SK-N-SH (cell line): ENCODE measurements at regions of chr1 and their contacts with region 1.

Region 1: GRCh38 chr1:53754484-53755312 is 15.7 kb upstream of the GLIS1 start:
- DNase-seq: peak; percentile 58
- H3K4me3 ChIP-seq: no peak overlapping the region
- H3K27ac ChIP-seq: no peak overlapping the region
- H3K4me1 ChIP-seq: no peaks in the 10 kb centered on the region
- H3K27me3 ChIP-seq: no peaks in the 10 kb centered on the region
- CTCF ChIP-seq: peak; percentile 87
- EP300 ChIP-seq: no peak
- RAD21 ChIP-seq: peak; percentile 87

Region 2: DNA sequence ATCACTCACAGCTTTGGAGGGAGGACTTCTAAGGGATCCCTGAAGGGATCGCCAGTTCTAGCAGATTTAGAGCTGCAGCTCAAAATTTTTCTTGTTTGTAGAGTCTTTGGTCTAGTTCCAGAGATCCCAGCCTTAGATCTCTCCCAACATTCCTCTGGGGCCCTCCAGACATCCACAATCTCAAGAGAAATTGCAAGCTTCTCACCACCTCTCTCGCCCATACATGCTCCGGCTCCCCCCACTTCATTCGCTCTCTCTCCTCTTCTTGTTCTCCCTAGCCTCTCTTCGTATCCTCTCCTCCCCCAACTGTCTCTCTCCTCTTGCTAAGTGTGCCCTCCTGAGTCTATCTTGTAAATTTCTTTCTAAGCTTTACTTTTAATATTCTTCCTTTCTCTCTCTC is 1186.8 kb before region 1 on chr1:
- CTCF ChIA-PET with region 1: no interaction called
- POLR2A ChIA-PET with region 1: no interaction called
- DNase-seq: no peak
- H3K4me3 ChIP-seq: no peak overlapping the region
- H3K27ac ChIP-seq: no peak overlapping the region
- H3K4me1 ChIP-seq: peaks cover 0 to 6% of the 10 kb centered on the region in 2 experiments; a peak in 1 of 4 replicates
- H3K27me3 ChIP-seq: no peaks in the 10 kb centered on the region
- CTCF ChIP-seq: no peak
- EP300 ChIP-seq: no peak
- RAD21 ChIP-seq: 0 out of 2 replicates have a peak, but pooled peaks have one; percentile 11

Region 3: GRCh38 chr1:53462769-53463501 is 291.8 kb before region 1 on chr1:
- CTCF ChIA-PET with region 1: interaction called, 10 read pairs
- POLR2A ChIA-PET with region 1: no interaction called
- DNase-seq: peak; percentile 81
- H3K4me3 ChIP-seq: no peak overlapping the region
- H3K27ac ChIP-seq: peak overlapping the region in 1 of 2 experiments; percentile 76; a peak in 2 of 4 replicates
- H3K4me1 ChIP-seq: peaks cover 0 to 18% of the 10 kb centered on the region in 2 experiments; a peak in 1 of 4 replicates
- H3K27me3 ChIP-seq: no peaks in the 10 kb centered on the region
- CTCF ChIP-seq: no peak
- EP300 ChIP-seq: peak in 1 of 2 experiments; percentile 36; a peak in 1 of 4 replicates
- RAD21 ChIP-seq: no peak

Region 4: DNA sequence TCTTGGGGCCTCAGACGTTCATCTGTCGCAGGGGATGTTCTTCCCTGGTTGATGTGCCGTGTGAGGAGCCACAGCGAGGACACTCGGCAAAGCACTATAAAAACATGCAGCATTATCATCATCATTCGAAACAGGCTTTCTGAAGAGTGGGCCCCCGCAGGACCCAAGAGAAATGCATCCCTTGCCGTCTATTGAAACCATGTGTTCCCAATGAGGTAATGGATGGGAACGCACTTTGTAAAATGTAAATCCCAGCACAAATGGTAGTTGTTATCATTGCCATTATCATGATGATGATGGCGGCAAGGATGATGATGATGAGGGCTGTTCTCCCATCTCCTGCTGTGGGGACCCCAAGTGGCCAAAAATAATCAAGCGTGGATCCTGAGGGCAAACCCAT is 92.5 kb before region 1 on chr1:
- CTCF ChIA-PET with region 1: no interaction called
- POLR2A ChIA-PET with region 1: no interaction called
- DNase-seq: no peak
- H3K4me3 ChIP-seq: no peak overlapping the region
- H3K27ac ChIP-seq: no peak overlapping the region
- H3K4me1 ChIP-seq: no peaks in the 10 kb centered on the region; a peak in 1 of 4 replicates
- H3K27me3 ChIP-seq: no peaks in the 10 kb centered on the region
- CTCF ChIP-seq: no peak
- EP300 ChIP-seq: no peak
- RAD21 ChIP-seq: no peak

Region 5: GRCh38 chr1:53889304-53890298 is 134.9 kb after region 1 on chr1 and contains the start of gene YIPF1:
- CTCF ChIA-PET with region 1: no interaction called
- POLR2A ChIA-PET with region 1: no interaction called
- DNase-seq: peak; percentile 94
- H3K4me3 ChIP-seq: peak within 1 kb of the TSS; percentile 80 to 100
- H3K27ac ChIP-seq: peak within 1 kb of the TSS; percentile 54 to 75
- H3K4me1 ChIP-seq: peaks cover 0 to 7% of the 10 kb centered on the region in 2 experiments; a peak in 2 of 4 replicates
- H3K27me3 ChIP-seq: no peaks in the 10 kb centered on the region
- CTCF ChIP-seq: no peak
- EP300 ChIP-seq: no peak
- RAD21 ChIP-seq: no peak
- polyA plus RNA-seq, gene YIPF1: 23.1 and 31.7 TPM in 2 replicates